HEK293 (cell line): ENCODE measurements at regions of chr11 and their contacts with region 1.

Region 1: GRCh38 chr11:122863704-122864326 is 18.7 kb upstream of the JHY start:
- H3K4me3 ChIP-seq: no peak overlapping the region
- H3K27ac ChIP-seq: no peak overlapping the region
- H3K4me1 ChIP-seq: no peaks in the 10 kb centered on the region
- CTCF ChIP-seq: no peak

Region 2: DNA sequence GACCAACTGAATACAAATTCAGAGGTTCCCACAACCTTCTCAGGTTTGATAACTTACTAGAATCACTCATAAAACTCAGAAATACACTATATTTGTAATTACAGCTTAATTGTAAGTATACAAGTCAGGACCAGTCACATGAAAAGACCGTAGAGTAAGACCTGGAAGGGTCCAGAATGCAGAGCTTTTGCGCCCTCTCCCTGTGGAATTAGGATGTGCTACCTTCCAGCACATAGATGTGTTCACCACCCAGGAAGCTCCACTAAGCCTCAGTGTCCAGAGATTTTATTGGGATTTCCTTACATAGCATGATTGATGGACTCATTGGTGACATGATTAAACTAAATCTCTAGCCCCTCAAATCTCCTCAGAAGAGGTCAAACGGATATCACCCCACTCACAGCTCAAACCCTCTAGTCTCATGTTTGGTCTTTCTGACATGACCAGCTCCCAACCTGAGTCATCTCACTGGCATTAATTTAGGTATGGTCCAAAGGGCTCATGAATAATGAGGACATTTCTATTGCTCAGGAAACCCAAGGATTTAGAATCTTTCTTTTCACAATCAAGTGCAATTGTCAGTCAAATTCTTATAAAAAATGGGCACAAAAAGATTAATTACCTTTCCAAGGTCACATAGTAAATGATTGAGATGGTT is 285.5 kb before region 1 on chr11:
- CTCF ChIA-PET with region 1: interaction called, 11 read pairs
- POLR2A ChIA-PET with region 1: no interaction called
- H3K4me3 ChIP-seq: no peak overlapping the region
- H3K27ac ChIP-seq: no peak overlapping the region
- H3K4me1 ChIP-seq: no peaks in the 10 kb centered on the region
- CTCF ChIP-seq: no peak

Region 3: GRCh38 chr11:122721964-122722266 is 141.9 kb before region 1 on chr11:
- CTCF ChIA-PET with region 1: no interaction called
- POLR2A ChIA-PET with region 1: no interaction called
- H3K4me3 ChIP-seq: no peak overlapping the region
- H3K27ac ChIP-seq: no peak overlapping the region
- H3K4me1 ChIP-seq: 0 out of 2 replicates have a peak, but pooled peaks cover 3% of the 10 kb centered on the region
- CTCF ChIP-seq: no peak

Region 4: DNA sequence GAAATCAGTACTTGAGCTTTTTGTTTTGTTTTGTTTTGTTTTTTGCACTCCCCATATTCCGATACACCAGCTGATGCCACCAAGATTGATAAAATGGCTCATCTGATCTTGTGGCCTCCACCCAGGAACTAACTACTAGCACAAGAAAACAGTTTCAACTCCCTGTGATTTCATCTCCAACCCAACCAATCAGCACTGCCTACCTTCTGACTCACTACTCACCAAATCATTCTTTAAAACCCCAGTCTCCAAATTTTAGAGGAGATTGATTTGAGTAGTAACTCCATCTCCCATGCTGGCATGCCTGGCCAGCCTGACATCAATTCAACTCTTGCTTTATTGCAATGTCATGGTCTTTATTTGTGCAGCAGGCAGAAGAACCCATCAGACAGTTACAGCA is 41.6 kb before region 1 on chr11:
- CTCF ChIA-PET with region 1: no interaction called
- POLR2A ChIA-PET with region 1: no interaction called
- H3K4me3 ChIP-seq: no peak overlapping the region
- H3K27ac ChIP-seq: no peak overlapping the region
- H3K4me1 ChIP-seq: no peaks in the 10 kb centered on the region
- CTCF ChIP-seq: no peak

Region 5: GRCh38 chr11:122874991-122875390 is 11.2 kb after region 1 on chr11:
- CTCF ChIA-PET with region 1: interaction called, 22 read pairs
- POLR2A ChIA-PET with region 1: no interaction called
- H3K4me3 ChIP-seq: no peak overlapping the region
- H3K27ac ChIP-seq: no peak overlapping the region
- H3K4me1 ChIP-seq: no peaks in the 10 kb centered on the region
- CTCF ChIP-seq: no peak

Region 6: GRCh38 chr11:122882857-122883645 is 19.2 kb after region 1 on chr11:
- CTCF ChIA-PET with region 1: interaction called, 18 read pairs
- POLR2A ChIA-PET with region 1: no interaction called
- H3K4me3 ChIP-seq: peak overlapping the region; percentile 70
- H3K27ac ChIP-seq: peak overlapping the region; percentile 93
- H3K4me1 ChIP-seq: no peaks in the 10 kb centered on the region
- CTCF ChIP-seq: 0 out of 2 replicates have a peak, but pooled peaks have one; percentile 10

Region 7: DNA sequence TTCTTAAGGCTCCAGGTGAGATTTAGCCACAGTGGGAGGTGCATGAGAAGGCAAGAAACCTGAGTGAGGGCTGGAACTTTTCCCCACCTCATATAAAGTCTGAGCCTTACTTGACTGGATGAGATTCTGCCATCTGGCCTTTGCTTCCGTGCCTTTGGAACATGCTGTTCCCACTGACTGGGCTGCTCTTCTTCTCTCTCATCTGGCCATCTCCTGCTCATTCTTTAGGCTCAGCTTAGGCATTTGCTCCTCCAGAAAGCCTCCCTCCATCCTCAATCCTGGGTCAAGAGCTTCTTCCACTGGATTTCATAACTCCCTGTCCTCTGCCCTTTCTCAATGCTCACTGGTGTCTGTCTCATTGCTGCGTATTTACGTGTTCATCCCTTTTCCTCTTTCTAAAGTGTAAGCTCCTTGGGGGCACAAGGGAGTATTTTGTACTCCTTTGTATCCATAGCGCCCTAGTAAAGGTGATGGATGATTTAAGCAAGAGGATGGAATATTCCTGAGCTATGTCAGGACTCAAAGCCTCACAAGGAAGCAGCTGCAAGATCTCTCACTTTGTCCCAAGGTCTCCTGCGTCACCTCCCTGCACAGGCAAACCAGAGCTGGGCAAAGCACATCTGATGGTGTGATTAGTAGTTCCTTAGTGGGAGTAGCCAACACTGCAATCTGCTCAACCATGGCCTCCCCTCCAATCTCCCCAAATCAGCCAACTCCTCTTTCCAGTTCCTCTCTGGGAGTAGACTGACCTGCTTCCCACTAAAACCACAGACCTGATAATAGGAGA is 182.9 kb after region 1 on chr11:
- CTCF ChIA-PET with region 1: interaction called, 53 read pairs
- POLR2A ChIA-PET with region 1: no interaction called
- H3K4me3 ChIP-seq: no peak overlapping the region
- H3K27ac ChIP-seq: no peak overlapping the region
- H3K4me1 ChIP-seq: no peaks in the 10 kb centered on the region
- CTCF ChIP-seq: no peak

Region 8: GRCh38 chr11:123054301-123055065 is 190.7 kb after region 1 on chr11:
- CTCF ChIA-PET with region 1: interaction called, 53 read pairs
- POLR2A ChIA-PET with region 1: interaction called, 12 read pairs
- H3K4me3 ChIP-seq: no peak overlapping the region
- H3K27ac ChIP-seq: no peak overlapping the region
- H3K4me1 ChIP-seq: no peaks in the 10 kb centered on the region
- CTCF ChIP-seq: peak; percentile 19; the same call in 1 of the 2 replicates